ENCODE measurements at regions of chr6 and their contacts with region 1.

Region 1: GRCh38 chr6:119129148-119129967 is 50.9 kb upstream of the FAM184A start:
- DNase-seq: peak; percentile 46
- H3K4me3 Mint-ChIP-seq: no peak overlapping the region
- H3K27ac Mint-ChIP-seq: peak overlapping the region; percentile 34
- H3K4me1 Mint-ChIP-seq: peaks cover 30% of the 10 kb centered on the region
- H3K27me3 Mint-ChIP-seq: no peaks in the 10 kb centered on the region
- CTCF ChIP-seq: peak; percentile 54

Region 2: DNA sequence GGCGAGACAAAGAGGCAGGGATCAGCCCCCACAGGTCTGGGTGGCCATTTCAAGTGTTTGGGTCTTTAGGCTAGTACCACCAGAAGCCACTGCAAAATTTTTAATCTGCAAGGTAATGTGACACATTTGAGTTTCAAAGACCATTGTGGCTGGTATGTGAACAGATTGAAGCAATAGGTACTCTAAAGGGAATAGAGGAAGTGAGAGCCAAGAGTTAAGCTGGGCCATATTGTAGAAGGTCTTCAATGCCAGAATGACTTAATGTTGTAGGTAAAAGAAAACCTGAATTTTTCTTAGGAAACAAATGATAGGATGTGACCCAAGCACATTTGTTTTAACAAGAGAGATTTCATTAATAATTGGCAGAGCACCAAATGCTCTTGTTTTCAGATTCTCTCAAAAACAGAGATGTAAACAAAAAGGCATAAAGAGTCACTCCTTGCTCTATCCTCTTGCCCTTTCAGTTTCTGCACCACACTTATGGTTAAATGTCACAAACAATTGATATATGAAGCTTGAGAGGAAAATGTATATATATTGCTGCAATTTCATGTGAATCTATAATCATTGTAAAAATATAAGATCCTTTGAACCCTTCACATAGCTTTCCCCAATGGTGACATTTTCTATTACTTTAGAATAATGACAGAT is 888.4 kb before region 1 on chr6:
- CTCF ChIA-PET with region 1: no interaction called
- intact Hi-C with region 1: no loop called
- DNase-seq: no peak
- H3K4me3 Mint-ChIP-seq: no peak overlapping the region
- H3K27ac Mint-ChIP-seq: no peak overlapping the region
- H3K4me1 Mint-ChIP-seq: no peaks in the 10 kb centered on the region
- H3K27me3 Mint-ChIP-seq: peaks cover 37% of the 10 kb centered on the region
- CTCF ChIP-seq: no peak

Region 3: DNA sequence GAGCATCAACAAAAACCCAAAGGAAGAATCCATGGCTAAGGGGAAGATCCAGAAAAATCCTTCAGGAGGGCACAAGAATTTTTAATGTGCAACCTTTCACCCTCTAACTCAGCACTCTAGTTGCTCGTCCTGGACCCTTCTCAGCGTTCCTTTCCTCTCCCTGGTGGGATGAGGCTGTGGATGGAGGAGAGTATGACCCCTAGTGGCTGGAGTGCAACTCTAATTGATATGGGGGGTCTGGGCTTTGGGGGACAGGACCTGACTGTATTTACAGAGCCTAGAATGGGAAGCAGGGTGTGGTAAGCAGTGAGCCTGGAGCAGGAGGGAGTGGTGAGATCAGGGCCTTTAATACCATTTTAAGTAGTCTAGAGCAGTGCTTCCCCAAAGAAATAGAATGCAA is 394.0 kb before region 1 on chr6:
- CTCF ChIA-PET with region 1: no interaction called
- intact Hi-C with region 1: no loop called
- DNase-seq: peak; percentile 15
- H3K4me3 Mint-ChIP-seq: no peak overlapping the region
- H3K27ac Mint-ChIP-seq: no peak overlapping the region
- H3K4me1 Mint-ChIP-seq: no peaks in the 10 kb centered on the region
- H3K27me3 Mint-ChIP-seq: peaks cover 28% of the 10 kb centered on the region
- CTCF ChIP-seq: peak; percentile 24

Region 4: GRCh38 chr6:118963003-118963402 is 166.4 kb before region 1 on chr6:
- CTCF ChIA-PET with region 1: no interaction called
- intact Hi-C with region 1: no loop called
- DNase-seq: no peak
- H3K4me3 Mint-ChIP-seq: no peak overlapping the region
- H3K27ac Mint-ChIP-seq: no peak overlapping the region
- H3K4me1 Mint-ChIP-seq: peaks cover 9% of the 10 kb centered on the region
- H3K27me3 Mint-ChIP-seq: no peaks in the 10 kb centered on the region
- CTCF ChIP-seq: no peak

Region 5: GRCh38 chr6:119308048-119308570 is 178.8 kb after region 1 on chr6:
- CTCF ChIA-PET with region 1: no interaction called
- intact Hi-C with region 1: loop called (anchors 5 kb)
- DNase-seq: no peak
- H3K4me3 Mint-ChIP-seq: no peak overlapping the region
- H3K27ac Mint-ChIP-seq: peak overlapping the region; percentile 38
- H3K4me1 Mint-ChIP-seq: peaks cover 43% of the 10 kb centered on the region
- H3K27me3 Mint-ChIP-seq: no peaks in the 10 kb centered on the region
- CTCF ChIP-seq: no peak

Measured in Calu3 (cell line).